ENCODE measurements at regions of chr1 and their contacts with region 1.

Region 1: GRCh38 chr1:151809269-151809984 is 4.2 kb upstream of the LINGO4 start:
- DNase-seq: no peak
- H3K4me3 ChIP-seq: no peak overlapping the region
- H3K27ac ChIP-seq: no peak overlapping the region
- H3K4me1 ChIP-seq: no peaks in the 10 kb centered on the region
- H3K27me3 ChIP-seq: peaks cover 3% of the 10 kb centered on the region
- CTCF ChIP-seq: no peak

Region 2: DNA sequence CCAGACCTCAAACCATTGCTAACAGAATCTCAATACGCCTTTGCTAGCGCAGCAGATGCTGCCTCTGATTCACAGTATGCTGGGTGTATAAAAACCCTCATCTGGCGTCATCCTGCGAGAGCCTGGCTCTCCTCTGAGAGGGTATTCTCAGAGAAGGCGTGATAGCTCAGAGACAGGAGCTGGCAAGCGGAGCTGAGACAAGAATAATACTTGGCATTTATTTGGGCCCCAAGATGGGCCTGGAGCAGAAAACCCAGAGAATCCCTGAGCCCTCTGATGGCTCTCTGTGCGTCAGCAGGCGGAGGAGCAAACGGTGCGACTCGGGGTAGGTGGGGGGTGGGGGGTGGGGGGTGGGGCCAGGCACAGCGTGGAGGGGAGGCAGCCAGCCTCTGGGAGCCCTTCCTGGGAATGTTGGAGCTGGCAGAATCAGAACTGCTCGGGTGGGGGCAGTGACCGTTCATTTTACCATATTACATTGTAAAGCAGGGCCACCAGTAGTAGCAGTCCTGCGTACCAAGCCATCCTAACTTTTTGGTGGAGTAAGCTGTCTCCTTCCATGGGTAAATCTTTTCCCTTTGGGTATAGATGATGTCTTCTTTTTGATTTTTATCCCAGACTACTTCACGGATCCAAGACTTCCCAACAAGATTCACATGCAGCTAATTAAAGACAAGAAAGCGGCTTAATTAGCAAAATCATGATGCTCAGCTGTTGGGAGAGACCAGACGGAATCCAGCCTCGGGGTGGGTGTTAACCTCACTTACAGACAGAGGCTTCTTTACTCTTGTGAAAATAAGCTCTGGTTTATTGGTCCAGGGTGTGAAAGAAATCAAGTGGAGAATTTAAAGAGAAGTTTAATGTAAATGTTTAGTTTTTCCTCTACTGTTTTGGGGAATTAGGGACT is 81.0 kb before region 1 on chr1:
- CTCF ChIA-PET with region 1: no interaction called
- dilution Hi-C with region 1: loop called (anchors 5 kb)
- in situ Hi-C with region 1: no loop called
- intact Hi-C with region 1: no loop called
- DNase-seq: no peak
- H3K4me3 ChIP-seq: no peak overlapping the region
- H3K27ac ChIP-seq: no peak overlapping the region
- H3K4me1 ChIP-seq: no peaks in the 10 kb centered on the region
- H3K27me3 ChIP-seq: peaks cover 1% of the 10 kb centered on the region
- CTCF ChIP-seq: no peak